H1 (cell line): ENCODE measurements at regions of chr4 and their contacts with region 1.

Region 1: GRCh38 chr4:5635826-5636195 is 72.5 kb downstream of the EVC2 start:
- DNase-seq: no peak
- H3K4me3 ChIP-seq: no peak overlapping the region
- H3K27ac ChIP-seq: no peak overlapping the region
- H3K4me1 ChIP-seq: peaks cover 2 to 8% (median 2%) of the 10 kb centered on the region in 4 experiments; a peak in 3 of 7 replicates
- H3K27me3 ChIP-seq: no peaks in the 10 kb centered on the region
- CTCF ChIP-seq: no peak
- EP300 ChIP-seq: no peak
- POLR2A ChIP-seq: no peak
- RAD21 ChIP-seq: no peak

Region 2: DNA sequence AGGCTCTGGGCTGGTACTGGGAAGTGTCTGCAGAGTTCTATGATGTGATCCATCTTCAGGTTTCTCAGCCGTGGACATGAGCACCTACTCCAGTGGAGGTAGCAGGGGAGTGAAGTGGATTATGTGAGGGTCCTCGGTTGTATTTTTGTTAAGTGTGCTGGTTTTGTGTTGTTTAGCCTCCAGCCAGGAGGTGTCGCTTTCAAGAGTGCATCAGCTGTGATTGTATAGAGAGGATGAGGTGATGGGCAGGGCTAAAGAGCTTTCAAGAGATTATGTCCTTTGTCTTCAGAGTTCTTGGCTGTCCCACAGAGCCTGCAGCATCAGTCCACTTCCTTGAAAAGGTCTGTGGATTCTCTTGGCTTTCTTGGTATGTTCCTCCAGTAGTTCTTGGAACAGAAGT is 327.9 kb before region 1 on chr4:
- CTCF ChIA-PET with region 1: no interaction called
- POLR2A ChIA-PET with region 1: no interaction called
- DNase-seq: no peak
- H3K4me3 ChIP-seq: no peak overlapping the region
- H3K27ac ChIP-seq: no peak overlapping the region
- H3K4me1 ChIP-seq: no peaks in the 10 kb centered on the region
- H3K27me3 ChIP-seq: no peaks in the 10 kb centered on the region
- CTCF ChIP-seq: peak in 1 of 3 experiments; percentile 23; a peak in 1 of 4 replicates
- EP300 ChIP-seq: no peak
- POLR2A ChIP-seq: no peak
- RAD21 ChIP-seq: no peak

Region 3: DNA sequence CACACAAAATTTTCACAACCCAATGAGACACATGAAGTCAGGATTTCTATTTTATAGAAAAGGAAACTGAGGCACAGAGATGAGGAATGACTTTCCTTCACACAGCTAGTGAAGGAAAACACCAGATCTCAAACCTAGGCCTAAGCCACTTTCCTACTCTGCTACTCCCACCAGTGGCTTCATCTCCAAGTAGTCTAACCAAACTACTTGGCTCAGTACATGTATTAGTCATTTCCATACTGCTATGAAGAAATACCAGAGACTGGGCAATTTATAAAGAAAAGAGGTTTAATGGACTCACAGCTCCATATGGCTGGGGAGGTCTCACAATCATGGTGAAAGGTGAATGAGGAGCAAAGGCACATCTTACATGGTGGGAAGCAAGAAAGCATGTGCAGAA is 124.0 kb before region 1 on chr4:
- CTCF ChIA-PET with region 1: no interaction called
- POLR2A ChIA-PET with region 1: no interaction called
- DNase-seq: no peak
- H3K4me3 ChIP-seq: no peak overlapping the region
- H3K27ac ChIP-seq: no peak overlapping the region
- H3K4me1 ChIP-seq: no peaks in the 10 kb centered on the region
- H3K27me3 ChIP-seq: no peaks in the 10 kb centered on the region
- CTCF ChIP-seq: no peak
- EP300 ChIP-seq: no peak
- POLR2A ChIP-seq: no peak
- RAD21 ChIP-seq: no peak

Region 4: GRCh38 chr4:5619913-5620625 is 15.7 kb before region 1 on chr4:
- CTCF ChIA-PET with region 1: interaction called, 13 read pairs
- POLR2A ChIA-PET with region 1: no interaction called
- DNase-seq: no peak
- H3K4me3 ChIP-seq: no peak overlapping the region
- H3K27ac ChIP-seq: no peak overlapping the region
- H3K4me1 ChIP-seq: no peaks in the 10 kb centered on the region
- H3K27me3 ChIP-seq: no peaks in the 10 kb centered on the region
- CTCF ChIP-seq: no peak
- EP300 ChIP-seq: no peak
- POLR2A ChIP-seq: no peak
- RAD21 ChIP-seq: no peak; a peak in 1 of 4 replicates

Region 5: GRCh38 chr4:5650040-5650439 is 14.2 kb after region 1 on chr4:
- CTCF ChIA-PET with region 1: interaction called, 23 read pairs
- POLR2A ChIA-PET with region 1: no interaction called
- DNase-seq: no peak
- H3K4me3 ChIP-seq: no peak overlapping the region
- H3K27ac ChIP-seq: no peak overlapping the region
- H3K4me1 ChIP-seq: no peaks in the 10 kb centered on the region
- H3K27me3 ChIP-seq: no peaks in the 10 kb centered on the region
- CTCF ChIP-seq: no peak
- EP300 ChIP-seq: no peak
- POLR2A ChIP-seq: no peak
- RAD21 ChIP-seq: no peak

Region 6: GRCh38 chr4:5952975-5953951 is 317.5 kb after region 1 on chr4:
- CTCF ChIA-PET with region 1: no interaction called
- POLR2A ChIA-PET with region 1: no interaction called
- DNase-seq: no peak
- H3K4me3 ChIP-seq: no peak overlapping the region
- H3K27ac ChIP-seq: no peak overlapping the region
- H3K4me1 ChIP-seq: peaks cover 3 to 22% (median 15%) of the 10 kb centered on the region in 4 experiments
- H3K27me3 ChIP-seq: peaks cover 0 to 2% (median 0%) of the 10 kb centered on the region in 4 experiments; a peak in 1 of 7 replicates
- CTCF ChIP-seq: no peak
- EP300 ChIP-seq: no peak
- POLR2A ChIP-seq: no peak
- RAD21 ChIP-seq: no peak